Esophagus squamous epithelium (tissue), 5 donors: ENCODE measurements at regions of chr14 and their contacts with region 1.

Region 1: DNA sequence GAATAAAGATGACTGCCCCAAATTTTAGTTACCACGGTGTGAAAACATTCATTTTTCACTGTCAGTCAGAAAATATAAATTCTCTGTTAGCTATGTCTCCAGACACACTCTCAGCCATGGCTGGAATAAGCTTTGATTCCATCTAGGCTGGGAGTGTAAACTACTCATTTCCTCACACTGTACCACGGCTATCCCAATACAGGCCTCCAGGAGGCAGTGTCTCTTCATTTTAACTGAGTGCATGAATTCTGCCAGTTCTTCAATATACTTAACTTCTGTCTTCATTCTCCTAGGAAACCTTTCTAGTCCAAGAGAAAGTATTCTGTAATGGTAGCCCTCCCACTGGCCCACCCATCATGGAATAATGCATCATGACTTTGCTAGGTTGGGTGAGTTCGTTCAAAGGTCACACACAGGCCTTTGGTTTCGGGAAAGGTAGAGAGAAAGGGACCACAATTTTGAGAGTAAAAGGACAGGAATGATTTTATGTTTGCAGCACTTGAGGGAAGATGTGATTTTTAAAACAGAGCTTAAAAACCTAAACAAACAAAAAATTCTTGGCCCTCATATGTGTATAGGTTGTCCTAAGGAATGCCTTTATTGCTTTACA is 381.1 kb downstream of the SEC23A start:
- DNase-seq: no peak
- H3K4me3 ChIP-seq: no peak overlapping the region
- H3K27ac ChIP-seq: no peak overlapping the region
- H3K4me1 ChIP-seq: peaks cover 0 to 4% (median 0%) of the 10 kb centered on the region in 3 donors
- H3K27me3 ChIP-seq: no peaks in the 10 kb centered on the region
- CTCF ChIP-seq: peak; percentile 52 to 79 (median 70)
- POLR2A ChIP-seq: no peak

Region 2: GRCh38 chr14:38867561-38868150 is 145.7 kb after region 1 on chr14:
- intact Hi-C with region 1: loop called (anchors 5 kb)
- DNase-seq: peak; percentile 13
- H3K4me3 ChIP-seq: no peak overlapping the region
- H3K27ac ChIP-seq: no peak overlapping the region
- H3K4me1 ChIP-seq: peaks cover 0 to 4% (median 0%) of the 10 kb centered on the region in 3 donors
- H3K27me3 ChIP-seq: no peaks in the 10 kb centered on the region
- CTCF ChIP-seq: peak; percentile 58 to 80 (median 71)
- POLR2A ChIP-seq: no peak

Region 3: DNA sequence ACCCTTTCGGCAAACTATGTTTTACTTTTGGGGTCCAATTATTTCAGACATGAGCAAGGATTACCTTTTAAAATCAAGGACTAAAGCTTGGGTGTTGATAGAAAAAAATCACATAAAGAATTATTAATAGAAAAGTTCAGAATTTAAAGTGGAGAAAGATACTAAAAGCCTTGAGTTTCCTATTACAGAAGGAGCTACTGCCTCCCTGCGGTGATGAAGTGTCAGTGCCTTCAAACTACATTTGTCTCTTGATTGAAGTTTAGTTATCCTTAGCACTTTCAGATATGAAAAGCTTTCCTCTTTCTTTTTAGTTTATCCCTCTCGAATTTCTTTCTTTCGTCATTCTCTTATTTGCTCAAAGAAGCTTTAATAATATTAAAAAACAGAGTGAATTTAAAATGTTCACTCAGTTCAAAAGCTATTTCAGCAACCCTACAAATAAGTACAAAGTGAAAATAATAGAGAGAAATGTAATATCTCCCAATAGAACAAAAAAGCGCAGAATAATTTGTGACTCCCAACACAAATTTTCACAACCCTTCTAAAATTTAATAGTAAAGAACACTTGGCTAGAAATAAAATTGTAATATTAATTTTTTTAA is 293.5 kb after region 1 on chr14:
- intact Hi-C with region 1: loop called (anchors 10 kb)
- DNase-seq: no peak
- H3K4me3 ChIP-seq: no peak overlapping the region
- H3K27ac ChIP-seq: no peak overlapping the region
- H3K4me1 ChIP-seq: peaks cover 0 to 12% (median 0%) of the 10 kb centered on the region in 3 donors
- H3K27me3 ChIP-seq: no peaks in the 10 kb centered on the region
- CTCF ChIP-seq: peak in 5 of 6 experiments; percentile 54 to 76 (median 65)
- POLR2A ChIP-seq: no peak